SK-N-SH (cell line): ENCODE measurements at regions of chr3 and their contacts with region 1.

Region 1: GRCh38 chr3:58414538-58415197 is 19.0 kb downstream of the PDHB start:
- DNase-seq: peak; percentile 66
- H3K4me3 ChIP-seq: no peak overlapping the region
- H3K27ac ChIP-seq: peak overlapping the region in 1 of 2 experiments; percentile 5; a peak in 1 of 4 replicates
- H3K4me1 ChIP-seq: peaks cover 0 to under 1% of the 10 kb centered on the region in 2 experiments; a peak in 1 of 4 replicates
- H3K27me3 ChIP-seq: no peaks in the 10 kb centered on the region
- CTCF ChIP-seq: peak; percentile 85
- EP300 ChIP-seq: no peak
- RAD21 ChIP-seq: peak; percentile 75

Region 2: DNA sequence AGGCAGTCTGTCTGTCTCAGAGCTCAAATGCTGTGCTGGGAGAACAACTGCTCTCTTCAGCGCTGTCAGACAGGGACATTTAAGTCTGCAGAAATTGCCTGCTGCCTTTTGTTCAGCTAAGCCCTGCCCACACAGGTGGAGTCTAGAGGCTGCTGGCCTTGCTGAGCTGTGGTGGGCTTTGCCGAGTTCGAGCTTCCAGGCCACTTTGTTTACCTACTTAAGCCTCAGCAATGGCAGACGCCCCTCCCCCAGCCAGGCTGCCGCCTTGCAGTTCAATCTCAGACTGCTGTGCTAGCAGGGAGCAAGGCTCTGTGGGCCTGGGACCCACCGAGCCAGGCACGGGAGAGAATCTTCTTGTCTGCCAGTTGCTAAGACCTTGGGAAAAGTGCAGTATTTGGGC is 133.6 kb before region 1 on chr3:
- CTCF ChIA-PET with region 1: no interaction called
- POLR2A ChIA-PET with region 1: no interaction called
- DNase-seq: no peak
- H3K4me3 ChIP-seq: no peak overlapping the region
- H3K27ac ChIP-seq: no peak overlapping the region
- H3K4me1 ChIP-seq: no peaks in the 10 kb centered on the region
- H3K27me3 ChIP-seq: no peaks in the 10 kb centered on the region
- CTCF ChIP-seq: no peak
- EP300 ChIP-seq: no peak
- RAD21 ChIP-seq: no peak

Region 3: DNA sequence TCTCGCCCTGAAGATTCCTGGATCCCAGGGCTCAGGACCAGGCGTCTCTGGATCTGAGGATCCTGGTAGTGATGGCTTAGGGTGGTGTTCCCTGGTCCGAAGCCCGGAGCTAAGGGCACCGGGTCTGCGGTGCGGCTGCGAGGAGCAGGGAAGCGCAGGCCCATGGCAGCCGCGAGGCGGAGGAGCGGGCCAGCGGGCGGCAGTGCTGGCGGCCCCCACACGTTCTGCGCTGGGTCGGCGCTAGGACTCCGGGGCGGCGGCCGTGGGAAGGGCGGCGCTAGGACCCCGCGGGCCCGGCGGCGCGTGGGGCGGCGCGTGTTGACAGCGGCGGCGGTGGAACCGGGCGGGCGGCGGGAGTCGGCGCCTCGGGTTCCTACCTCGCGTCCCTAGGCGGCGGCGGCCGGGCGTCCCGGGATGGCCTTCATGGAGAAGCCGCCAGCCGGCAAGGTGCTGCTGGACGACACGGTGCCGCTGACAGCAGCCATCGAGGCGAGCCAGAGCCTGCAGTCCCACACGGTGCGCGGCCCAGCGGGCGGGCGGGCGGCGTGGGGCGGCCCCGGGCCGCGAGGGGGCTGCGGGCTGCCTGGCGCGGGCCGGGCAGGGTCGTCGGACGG is 82.0 kb before region 1 on chr3 and contains the start of gene PXK:
- CTCF ChIA-PET with region 1: interaction called, 24 read pairs
- POLR2A ChIA-PET with region 1: no interaction called
- DNase-seq: peak; percentile 94
- H3K4me3 ChIP-seq: peak within 1 kb of the TSS; percentile 67 to 83
- H3K27ac ChIP-seq: peak within 1 kb of the TSS; percentile 7 to 88; a peak in 2 of 4 replicates
- H3K4me1 ChIP-seq: peaks cover 4 to 11% of the 10 kb centered on the region in 2 experiments; a peak in 3 of 4 replicates
- H3K27me3 ChIP-seq: no peaks in the 10 kb centered on the region
- CTCF ChIP-seq: peak; percentile 21
- EP300 ChIP-seq: peak in 1 of 2 experiments; percentile 37; a peak in 1 of 4 replicates
- RAD21 ChIP-seq: peak; percentile 33; the same call in 1 of the 2 replicates
- polyA plus RNA-seq, gene PXK: 8.4 and 9.3 TPM in 2 replicates

Region 4: DNA sequence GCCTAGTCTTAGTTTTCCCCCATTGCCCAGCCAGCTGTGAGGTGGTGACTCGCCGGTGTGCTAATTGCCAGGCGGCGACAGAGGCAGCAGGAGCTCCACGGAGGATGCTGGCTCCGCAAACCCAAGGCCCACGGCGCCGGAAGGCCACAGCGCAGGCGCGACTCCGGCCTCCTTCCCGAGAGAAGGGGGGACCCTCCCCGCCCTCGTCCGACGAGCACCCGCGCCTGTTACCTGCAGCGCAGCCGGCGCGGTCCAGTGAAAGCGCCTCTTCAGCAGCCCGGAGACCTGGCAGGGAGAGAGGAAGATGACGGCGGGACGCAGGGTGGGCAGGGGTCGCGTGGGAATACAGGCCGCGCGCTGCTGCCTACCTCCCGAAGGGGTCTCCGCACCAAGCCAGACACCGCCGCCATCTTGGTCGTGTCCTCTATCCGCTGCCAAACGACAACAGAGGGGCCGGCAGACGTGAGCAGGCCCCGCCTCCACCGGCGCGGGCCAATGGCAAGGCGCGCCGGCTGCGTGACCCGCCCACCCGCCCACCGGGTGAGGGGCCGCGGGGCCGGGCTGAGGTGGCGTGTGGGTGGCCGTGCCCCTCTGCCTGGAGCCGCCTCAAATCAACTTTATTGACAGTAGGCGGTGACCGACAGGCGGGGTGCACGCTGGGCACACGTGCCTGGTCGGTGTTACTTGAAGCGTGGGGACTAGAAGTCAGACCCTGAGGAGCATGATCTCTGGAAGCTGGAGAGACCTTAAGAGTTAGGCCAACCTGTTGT is 18.9 kb after region 1 on chr3 and contains the start of gene PDHB:
- CTCF ChIA-PET with region 1: interaction called, 10 read pairs
- POLR2A ChIA-PET with region 1: no interaction called
- DNase-seq: peak; percentile 98
- H3K4me3 ChIP-seq: peak within 1 kb of the TSS; percentile 82 to 83
- H3K27ac ChIP-seq: peak within 1 kb of the TSS; percentile 69 to 97
- H3K4me1 ChIP-seq: peaks cover 6 to 15% of the 10 kb centered on the region in 2 experiments
- H3K27me3 ChIP-seq: no peaks in the 10 kb centered on the region
- CTCF ChIP-seq: no peak
- EP300 ChIP-seq: 0 out of 4 replicates have a peak, but pooled peaks of 1 of the 2 experiments have one; percentile 8
- RAD21 ChIP-seq: no peak
- polyA plus RNA-seq, gene PDHB: 87.5 and 94.7 TPM in 2 replicates

Region 5: DNA sequence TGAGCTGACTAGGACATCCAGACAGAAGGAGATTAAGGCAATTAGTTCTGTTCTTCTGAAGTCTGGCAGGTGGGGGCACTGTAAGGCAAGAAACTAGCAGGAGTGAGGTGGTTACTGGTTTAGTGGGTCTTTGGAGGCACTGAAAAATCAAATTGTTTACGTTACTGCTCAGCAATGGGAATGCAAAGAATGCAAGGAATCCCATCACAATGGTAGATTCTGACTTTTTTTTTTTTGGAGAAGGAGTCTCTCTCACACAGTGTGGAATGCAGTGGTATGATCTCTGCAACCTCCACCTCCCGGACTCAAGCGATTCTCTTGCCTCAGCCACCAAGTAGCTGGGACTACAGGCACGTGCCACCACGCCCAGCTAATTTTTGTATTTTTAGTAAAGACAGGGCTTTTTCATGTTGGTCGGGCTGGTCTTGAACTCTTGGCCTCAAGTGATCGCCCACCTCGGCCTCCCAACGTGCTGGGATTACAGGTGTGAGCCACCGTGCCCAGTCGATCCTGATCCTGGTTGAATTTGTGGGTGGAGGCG is 146.2 kb after region 1 on chr3:
- CTCF ChIA-PET with region 1: no interaction called
- POLR2A ChIA-PET with region 1: no interaction called
- DNase-seq: no peak
- H3K4me3 ChIP-seq: no peak overlapping the region
- H3K27ac ChIP-seq: no peak overlapping the region
- H3K4me1 ChIP-seq: peaks cover 4 to 6% of the 10 kb centered on the region in 2 experiments; a peak in 1 of 4 replicates
- H3K27me3 ChIP-seq: no peaks in the 10 kb centered on the region
- CTCF ChIP-seq: peak; percentile 63
- EP300 ChIP-seq: peak in 1 of 2 experiments; percentile 70; a peak in 1 of 4 replicates
- RAD21 ChIP-seq: peak; percentile 49; the same call in 1 of the 2 replicates